GM10248 (cell line): ENCODE measurements at regions of chr9 and their contacts with region 1.

Region 1: DNA sequence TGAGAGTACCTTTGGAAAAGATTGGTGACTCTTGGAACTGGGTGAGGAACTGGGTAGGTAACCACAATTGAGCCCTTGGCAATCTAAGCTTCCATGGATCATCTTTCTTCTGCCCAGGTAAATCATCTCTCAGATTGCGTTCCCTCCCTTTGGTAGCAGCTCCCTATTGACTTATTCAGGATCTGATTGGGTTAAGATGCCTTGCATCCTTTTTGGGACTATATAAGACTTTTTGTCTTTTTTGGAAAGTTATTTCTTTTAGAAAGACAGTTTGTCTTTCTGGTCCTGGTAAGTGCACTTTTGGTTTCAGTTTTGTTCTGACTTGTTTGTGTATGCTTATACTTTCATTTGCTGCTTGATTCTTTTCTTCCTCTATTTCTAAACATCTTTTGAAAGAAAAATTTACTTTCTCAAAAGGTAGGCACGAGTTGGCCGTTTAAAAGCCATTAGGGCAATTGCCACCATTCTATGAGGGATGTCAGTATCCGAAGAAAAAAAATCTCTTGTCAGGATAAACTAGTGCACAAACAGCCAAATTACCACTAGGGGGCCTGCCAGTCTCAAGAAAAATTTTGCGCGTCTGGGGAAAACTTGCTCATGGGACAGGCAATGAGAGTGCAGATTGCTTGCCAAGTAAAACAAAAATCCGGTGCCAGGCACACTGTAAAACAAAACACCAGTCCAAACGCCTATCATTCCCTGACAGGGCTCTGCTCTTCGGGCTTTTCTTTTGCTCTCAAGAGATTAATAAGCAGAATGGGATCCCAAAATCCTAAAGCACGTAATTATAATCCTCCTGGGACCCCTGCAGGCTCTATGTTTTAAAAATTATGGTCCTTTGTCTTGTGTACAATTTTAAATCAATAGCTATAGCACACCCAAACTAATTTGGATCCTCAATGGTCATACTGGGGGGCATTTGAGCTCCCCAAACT is 12.8 kb downstream of the OR1J1 start:
- DNase-seq: peak; percentile 67
- CTCF ChIP-seq: peak; percentile 80

Region 2: GRCh38 chr9:122297512-122297911 is 167.4 kb before region 1 on chr9:
- CTCF ChIA-PET with region 1: no interaction called
- POLR2A ChIA-PET with region 1: no interaction called
- DNase-seq: no peak
- CTCF ChIP-seq: no peak

Region 3: DNA sequence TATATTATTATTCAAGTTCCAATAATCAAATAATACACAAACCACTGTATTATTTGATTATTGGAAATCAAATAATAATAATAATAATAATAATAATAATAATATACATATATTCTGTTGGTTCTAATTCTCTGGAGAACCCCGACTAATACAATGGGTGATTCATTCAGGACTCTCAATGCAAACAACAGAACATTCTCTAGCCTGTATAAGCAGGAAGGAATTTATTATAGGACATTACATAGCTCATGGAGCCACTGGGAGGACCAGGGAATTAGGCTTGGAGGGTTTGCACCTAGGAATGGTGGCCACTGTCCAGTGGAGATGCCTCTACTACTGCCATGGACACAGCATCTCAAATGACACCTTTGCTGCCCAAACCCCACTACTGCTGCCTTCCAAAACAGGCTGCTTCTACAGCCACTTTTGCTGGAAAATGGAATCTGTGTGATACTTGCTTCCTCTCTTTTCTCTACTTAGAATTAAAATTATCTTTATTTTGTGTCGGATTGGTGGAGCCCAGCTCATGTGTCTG is 68.2 kb before region 1 on chr9:
- CTCF ChIA-PET with region 1: no interaction called
- POLR2A ChIA-PET with region 1: no interaction called
- DNase-seq: no peak
- CTCF ChIP-seq: no peak

Region 4: DNA sequence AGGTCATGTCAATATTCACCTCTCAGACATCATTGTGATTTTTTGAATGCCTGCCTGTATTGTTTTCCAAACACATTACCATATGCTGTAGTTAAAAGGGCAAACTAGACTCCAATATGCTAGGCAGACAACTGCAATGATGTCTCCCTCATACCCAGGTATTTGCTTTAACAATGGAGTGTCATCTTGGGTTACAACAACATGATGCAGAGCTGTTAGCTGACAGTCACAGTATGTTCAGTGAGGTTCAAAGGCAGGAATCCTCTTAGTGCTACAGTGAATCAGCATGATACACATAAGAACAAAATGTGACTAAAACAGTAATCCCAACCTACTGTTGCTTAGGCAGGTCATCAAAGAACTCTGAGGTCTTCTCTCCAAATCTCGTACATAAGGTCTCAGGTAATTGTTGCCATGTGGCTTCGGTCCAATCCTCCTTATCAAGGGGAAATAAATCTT is 11.2 kb before region 1 on chr9:
- CTCF ChIA-PET with region 1: interaction called, 27 read pairs
- POLR2A ChIA-PET with region 1: no interaction called
- DNase-seq: no peak
- CTCF ChIP-seq: no peak

Region 5: DNA sequence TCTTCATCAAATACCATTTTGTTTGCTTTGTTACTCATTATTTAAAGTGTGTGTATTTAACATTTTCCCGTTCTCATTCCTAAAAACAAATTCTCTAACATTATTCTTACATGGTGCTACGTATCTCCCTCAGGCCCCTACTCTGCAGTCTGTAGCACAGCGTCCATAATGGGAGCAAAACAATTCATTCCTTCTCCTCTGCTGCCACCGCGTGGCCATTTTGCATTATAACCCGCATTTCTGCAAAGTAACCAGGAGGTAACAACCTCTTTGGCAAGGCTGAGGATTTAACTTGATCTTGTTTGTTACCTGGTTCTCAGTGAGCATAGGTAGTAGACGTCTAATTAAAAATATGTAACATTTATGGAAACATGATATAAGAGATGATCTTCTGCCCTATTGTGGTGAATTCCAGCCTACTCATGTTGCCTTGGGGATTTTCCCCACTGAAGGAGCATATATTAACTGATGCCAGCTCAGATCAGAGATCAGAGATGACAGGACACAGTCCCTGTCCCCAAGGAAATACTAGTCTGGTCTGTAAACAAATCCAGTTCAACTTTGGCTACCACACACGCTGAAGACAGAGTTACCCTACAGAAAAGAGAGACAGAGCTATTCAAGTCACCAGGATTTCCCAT is 345.5 kb after region 1 on chr9:
- CTCF ChIA-PET with region 1: interaction called, 65 read pairs
- POLR2A ChIA-PET with region 1: no interaction called
- DNase-seq: peak; percentile 82
- CTCF ChIP-seq: peak; percentile 89